Activated naive CD4-positive, alpha-beta T cell treated with anti-CD3 and anti-CD28 coated beads for 36 hours (primary cell): ENCODE measurements at regions of chr2 and their contacts with region 1.

Region 1: DNA sequence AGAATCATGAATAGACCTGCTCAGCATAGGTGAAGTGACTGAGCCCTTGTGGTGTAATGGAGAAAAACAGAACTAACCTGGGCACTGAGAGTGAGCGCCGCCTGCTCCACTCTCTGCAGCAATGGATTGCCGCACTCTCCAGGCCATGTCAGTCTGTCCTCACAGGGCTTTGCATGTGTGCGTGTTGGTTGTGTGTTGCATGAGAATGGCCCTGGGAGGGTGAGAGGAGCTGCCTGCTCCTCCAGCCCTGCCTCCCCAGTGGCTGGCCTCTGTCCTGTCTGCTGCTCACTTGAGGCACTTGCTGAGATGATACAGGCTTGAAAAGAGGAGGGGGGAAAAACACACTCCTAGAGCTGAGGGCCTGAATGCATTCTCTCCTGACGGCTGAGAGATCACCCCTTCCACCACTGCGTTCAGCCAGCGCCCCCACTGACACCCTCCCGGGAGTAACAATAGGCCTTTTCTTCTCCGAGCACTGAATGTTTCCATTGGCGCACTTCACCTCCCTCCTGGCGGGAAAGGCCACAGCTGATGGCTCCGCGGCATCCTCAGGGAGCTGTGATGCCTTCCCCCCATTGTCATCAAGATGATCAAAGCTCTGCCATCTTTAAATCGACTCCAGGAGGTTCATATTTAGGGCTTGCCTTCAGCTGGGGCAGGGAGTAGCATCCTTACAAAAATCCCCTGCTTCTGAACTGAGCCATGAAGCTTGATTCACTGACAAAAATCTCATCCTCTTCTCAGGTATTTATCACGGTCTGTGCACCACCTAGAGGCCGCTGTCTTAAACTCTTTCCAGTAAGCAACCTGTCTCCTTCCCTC is 49.9 kb upstream of the DAPL1 start:
- DNase-seq: peak; percentile 71
- H3K4me3 Mint-ChIP-seq: no peak overlapping the region
- H3K27ac Mint-ChIP-seq: no peak overlapping the region
- H3K4me1 Mint-ChIP-seq: peaks cover 1% of the 10 kb centered on the region
- H3K27me3 Mint-ChIP-seq: peaks cover 28% of the 10 kb centered on the region

Region 2: GRCh38 chr2:157497638-157498314 is 1247.5 kb before region 1 on chr2:
- CTCF ChIA-PET with region 1: no interaction called
- intact Hi-C with region 1: loop called (anchors 5 kb)
- DNase-seq: peak; percentile 25
- H3K4me3 Mint-ChIP-seq: no peak overlapping the region
- H3K27ac Mint-ChIP-seq: no peak overlapping the region
- H3K4me1 Mint-ChIP-seq: peaks cover 23% of the 10 kb centered on the region
- H3K27me3 Mint-ChIP-seq: no peaks in the 10 kb centered on the region

Region 3: DNA sequence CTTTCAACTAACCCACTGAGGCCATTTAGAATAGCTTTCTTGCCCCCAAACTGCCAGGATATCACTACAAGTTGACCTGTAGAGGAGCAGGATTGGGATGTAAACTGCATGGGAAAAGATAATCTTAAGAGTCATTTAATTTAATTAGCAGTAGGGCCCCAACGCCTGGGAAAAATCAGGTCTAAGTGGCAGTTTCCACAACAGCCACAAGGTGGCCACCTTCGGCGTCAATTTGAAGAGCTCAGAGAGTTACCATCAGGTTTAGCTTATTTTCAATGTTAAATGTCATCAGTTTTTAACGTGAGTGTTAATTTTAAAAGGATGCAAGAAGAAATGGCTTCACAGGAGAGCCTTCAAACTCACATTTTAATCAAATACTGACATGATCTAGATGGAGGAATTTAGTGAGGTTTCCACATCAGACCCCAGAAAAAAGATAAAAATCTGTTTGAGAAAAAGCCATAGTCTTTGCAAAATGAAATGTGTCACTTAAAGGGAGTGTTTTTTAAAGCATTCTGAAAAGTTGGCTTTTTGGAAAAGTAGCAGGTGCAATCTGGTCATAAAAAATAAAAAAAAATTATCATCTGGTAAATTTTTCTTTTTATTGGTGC is 720.9 kb before region 1 on chr2:
- CTCF ChIA-PET with region 1: interaction called, 26 read pairs
- intact Hi-C with region 1: loop called (anchors 2 kb)
- DNase-seq: peak; percentile 76
- H3K4me3 Mint-ChIP-seq: no peak overlapping the region
- H3K27ac Mint-ChIP-seq: no peak overlapping the region
- H3K4me1 Mint-ChIP-seq: peaks cover 7% of the 10 kb centered on the region
- H3K27me3 Mint-ChIP-seq: no peaks in the 10 kb centered on the region

Region 4: DNA sequence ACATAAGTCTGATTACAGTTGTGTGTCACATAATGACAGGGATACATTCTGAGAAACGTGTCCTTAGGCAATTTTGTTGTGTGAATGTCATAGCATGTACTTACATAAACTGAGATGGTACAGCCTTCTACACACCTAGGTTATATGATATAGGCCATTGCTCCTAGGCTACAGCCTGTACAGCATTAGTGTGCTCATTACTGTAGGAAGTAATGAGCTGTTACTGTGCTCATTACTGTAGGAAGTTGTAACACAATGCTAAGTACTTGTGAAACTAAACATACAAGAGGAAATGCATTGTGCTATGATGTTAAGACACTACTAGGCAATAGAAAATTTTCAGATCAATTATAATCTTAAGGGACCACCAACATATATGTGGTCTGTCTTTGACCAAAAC is 570.8 kb before region 1 on chr2:
- CTCF ChIA-PET with region 1: interaction called, 18 read pairs
- intact Hi-C with region 1: loop called (anchors 1 kb)
- DNase-seq: no peak
- H3K4me3 Mint-ChIP-seq: no peak overlapping the region
- H3K27ac Mint-ChIP-seq: no peak overlapping the region
- H3K4me1 Mint-ChIP-seq: no peaks in the 10 kb centered on the region
- H3K27me3 Mint-ChIP-seq: peaks cover 23% of the 10 kb centered on the region

Region 5: DNA sequence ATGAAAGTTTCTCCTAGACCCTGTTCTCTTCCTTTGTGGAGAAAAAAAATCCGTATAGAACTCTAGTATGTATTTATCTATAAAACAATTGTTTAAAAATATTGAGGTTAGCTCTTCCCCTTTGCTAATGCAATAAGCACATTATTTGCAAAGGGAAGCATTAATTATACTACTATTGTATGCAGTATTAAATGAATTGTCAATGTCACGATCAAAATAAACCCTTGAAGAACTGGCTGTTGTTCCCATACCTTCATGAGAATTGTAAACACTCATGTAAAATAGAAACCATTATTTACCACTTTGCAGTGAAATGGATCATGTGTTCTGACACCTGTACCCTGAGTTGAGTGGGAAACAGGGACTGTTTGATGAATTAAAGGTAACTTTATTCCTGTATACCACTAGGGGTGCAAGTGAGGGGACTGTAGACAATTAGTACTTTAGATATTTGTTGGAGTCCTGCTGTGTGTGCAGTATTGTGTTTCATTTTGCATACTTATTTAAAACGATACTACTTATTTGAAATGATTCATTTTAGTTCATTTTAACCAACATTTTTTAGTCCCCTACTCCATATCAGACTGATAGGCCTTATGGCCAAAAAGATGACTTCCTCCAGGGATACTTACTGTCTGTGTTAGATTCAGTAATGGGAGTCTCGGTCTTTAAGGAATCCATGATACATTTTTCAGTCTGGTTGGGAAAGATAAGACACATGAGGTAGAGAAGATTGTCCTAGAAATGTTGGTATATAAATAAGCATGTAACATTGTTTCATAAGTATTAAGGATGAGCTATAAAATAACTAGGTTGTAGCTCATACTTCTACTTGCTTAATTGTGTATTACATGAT is 280.6 kb before region 1 on chr2:
- CTCF ChIA-PET with region 1: no interaction called
- intact Hi-C with region 1: loop called (anchors 5 kb)
- DNase-seq: no peak
- H3K4me3 Mint-ChIP-seq: no peak overlapping the region
- H3K27ac Mint-ChIP-seq: no peak overlapping the region
- H3K4me1 Mint-ChIP-seq: peaks cover 10% of the 10 kb centered on the region
- H3K27me3 Mint-ChIP-seq: no peaks in the 10 kb centered on the region